ENCODE measurements at regions of chr1 and their contacts with region 1.

Region 1: GRCh38 chr1:234154320-234155251 is 218.7 kb upstream of the COA6 start:
- DNase-seq: peak; percentile 31
- H3K4me3 Mint-ChIP-seq: no peak overlapping the region
- H3K27ac Mint-ChIP-seq: no peak overlapping the region
- H3K4me1 Mint-ChIP-seq: no peaks in the 10 kb centered on the region
- H3K27me3 Mint-ChIP-seq: no peaks in the 10 kb centered on the region

Region 2: DNA sequence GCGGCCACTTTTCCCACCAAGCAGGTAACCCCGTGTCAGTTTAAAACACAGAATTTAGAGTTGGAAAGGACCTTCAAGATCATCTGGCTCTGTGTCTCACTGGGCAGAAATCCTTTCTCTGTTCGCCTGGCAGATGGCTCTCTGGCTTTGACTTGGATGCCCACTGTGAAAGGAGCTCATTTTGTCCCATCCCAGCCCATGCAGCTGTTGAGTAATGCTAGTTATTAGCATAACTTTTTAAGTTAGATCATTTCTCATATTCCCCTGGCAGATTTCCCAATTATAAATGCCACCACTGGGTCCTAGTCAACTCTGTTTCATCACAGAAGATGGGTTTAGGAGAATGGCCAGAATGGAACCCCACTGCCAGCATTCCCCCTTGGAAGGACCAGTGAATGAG is 194.2 kb before region 1 on chr1:
- CTCF ChIA-PET with region 1: no interaction called
- intact Hi-C with region 1: no loop called
- DNase-seq: no peak
- H3K4me3 Mint-ChIP-seq: no peak overlapping the region
- H3K27ac Mint-ChIP-seq: no peak overlapping the region
- H3K4me1 Mint-ChIP-seq: no peaks in the 10 kb centered on the region
- H3K27me3 Mint-ChIP-seq: peaks cover 4% of the 10 kb centered on the region

Region 3: DNA sequence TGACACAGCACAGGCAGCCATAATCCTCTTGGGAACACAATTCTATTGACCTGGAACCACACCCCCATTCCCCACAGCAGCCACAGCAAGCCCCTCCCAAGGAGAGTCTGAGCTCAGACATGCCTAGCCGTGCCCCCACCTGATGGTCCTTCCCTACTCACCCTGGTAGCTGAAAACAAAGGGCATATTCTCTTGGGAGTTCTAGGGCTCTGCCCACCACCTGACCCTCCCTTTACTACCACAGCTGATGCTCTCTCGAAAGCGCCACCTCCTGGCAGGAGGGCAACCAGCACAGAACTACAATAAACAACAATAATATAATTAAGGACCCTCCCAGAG is 33.8 kb after region 1 on chr1:
- CTCF ChIA-PET with region 1: interaction called, 3 read pairs
- intact Hi-C with region 1: loop called (anchors 2 kb)
- DNase-seq: peak; percentile 21
- H3K4me3 Mint-ChIP-seq: no peak overlapping the region
- H3K27ac Mint-ChIP-seq: no peak overlapping the region
- H3K4me1 Mint-ChIP-seq: no peaks in the 10 kb centered on the region
- H3K27me3 Mint-ChIP-seq: peaks cover 41% of the 10 kb centered on the region

Region 4: DNA sequence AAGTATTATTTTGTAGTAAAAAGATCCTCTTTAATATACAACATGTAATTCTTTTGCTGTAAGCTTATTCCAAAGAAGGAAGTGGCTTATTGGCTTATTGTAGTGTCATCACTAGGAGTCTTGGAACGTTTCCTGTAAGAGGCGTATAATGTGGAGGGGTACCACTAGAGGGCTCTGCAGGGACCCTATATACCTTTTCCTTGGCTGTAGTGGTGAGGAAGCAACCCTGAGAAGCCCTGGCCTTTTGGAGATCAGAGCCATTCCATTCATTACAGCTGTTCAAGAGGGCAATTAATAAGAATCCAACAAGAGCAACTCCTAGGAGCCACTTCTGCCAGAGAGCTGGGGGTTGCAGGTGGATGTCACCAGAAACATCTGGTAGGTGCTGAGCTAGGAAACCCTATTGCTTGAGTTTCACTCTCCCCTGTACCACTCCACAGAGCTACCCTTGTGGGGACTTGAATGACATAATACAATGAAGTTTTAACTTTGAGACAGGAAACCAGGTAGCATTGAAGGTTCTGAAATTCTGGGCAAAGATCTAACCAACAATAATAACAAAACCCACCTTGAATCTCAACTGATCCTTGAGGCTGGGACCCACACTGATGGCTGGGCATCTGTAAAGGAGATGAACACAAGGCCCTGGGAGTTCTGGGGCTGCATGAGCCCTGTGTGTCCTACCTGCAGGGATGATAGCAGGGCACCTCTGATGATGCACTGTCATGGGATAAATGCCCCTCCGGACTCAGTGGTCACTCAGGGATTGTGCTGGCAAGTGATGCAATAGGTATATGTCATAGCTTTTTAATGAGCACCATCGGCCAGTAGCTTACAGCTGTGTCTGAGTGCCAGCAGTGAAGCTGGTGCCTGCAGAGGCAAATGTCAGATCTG is 58.4 kb after region 1 on chr1:
- CTCF ChIA-PET with region 1: interaction called, 5 read pairs
- intact Hi-C with region 1: loop called (anchors 1 kb)
- DNase-seq: peak; percentile 56
- H3K4me3 Mint-ChIP-seq: no peak overlapping the region
- H3K27ac Mint-ChIP-seq: no peak overlapping the region
- H3K4me1 Mint-ChIP-seq: peaks cover 12% of the 10 kb centered on the region
- H3K27me3 Mint-ChIP-seq: peaks cover 43% of the 10 kb centered on the region

Region 5: GRCh38 chr1:234544087-234544579 is 389.5 kb after region 1 on chr1:
- CTCF ChIA-PET with region 1: no interaction called
- intact Hi-C with region 1: no loop called
- DNase-seq: peak; percentile 89
- H3K4me3 Mint-ChIP-seq: no peak overlapping the region
- H3K27ac Mint-ChIP-seq: peak overlapping the region; percentile 69
- H3K4me1 Mint-ChIP-seq: peaks cover 19% of the 10 kb centered on the region
- H3K27me3 Mint-ChIP-seq: no peaks in the 10 kb centered on the region

Measured in activated naive CD4-positive, alpha-beta T cell treated with anti-CD3 and anti-CD28 coated beads for 36 hours (primary cell).